ENCODE measurements at regions of chrX and their contacts with region 1.

Region 1: GRCh38 chrX:31658360-31658759 is 586.5 kb upstream of the FTHL17 start:
- DNase-seq: no peak
- ATAC-seq: no peak
- H3K4me3 ChIP-seq: no peak overlapping the region
- H3K27ac ChIP-seq: no peak overlapping the region
- H3K4me1 ChIP-seq: no peaks in the 10 kb centered on the region
- H3K27me3 ChIP-seq: no peaks in the 10 kb centered on the region
- CTCF ChIP-seq: peak in 2 of 3 experiments; percentile 8 to 35; a peak in 1 of 6 replicates
- POLR2A ChIP-seq: no peak
- RAD21 ChIP-seq: peak; percentile 28

Region 2: GRCh38 chrX:31036895-31037294 is 621.5 kb before region 1 on chrX:
- CTCF ChIA-PET with region 1: no interaction called
- POLR2A ChIA-PET with region 1: no interaction called
- RAD21 ChIA-PET with region 1: no interaction called
- intact Hi-C with region 1: loop called (anchors 2 kb)
- DNase-seq: peak; percentile 6
- ATAC-seq: peak; percentile 72
- H3K4me3 ChIP-seq: no peak overlapping the region
- H3K27ac ChIP-seq: no peak overlapping the region
- H3K4me1 ChIP-seq: no peaks in the 10 kb centered on the region
- H3K27me3 ChIP-seq: no peaks in the 10 kb centered on the region
- CTCF ChIP-seq: peak; percentile 7 to 56 (median 53); a peak in 4 of 6 replicates
- POLR2A ChIP-seq: no peak
- RAD21 ChIP-seq: peak; percentile 26

Region 3: DNA sequence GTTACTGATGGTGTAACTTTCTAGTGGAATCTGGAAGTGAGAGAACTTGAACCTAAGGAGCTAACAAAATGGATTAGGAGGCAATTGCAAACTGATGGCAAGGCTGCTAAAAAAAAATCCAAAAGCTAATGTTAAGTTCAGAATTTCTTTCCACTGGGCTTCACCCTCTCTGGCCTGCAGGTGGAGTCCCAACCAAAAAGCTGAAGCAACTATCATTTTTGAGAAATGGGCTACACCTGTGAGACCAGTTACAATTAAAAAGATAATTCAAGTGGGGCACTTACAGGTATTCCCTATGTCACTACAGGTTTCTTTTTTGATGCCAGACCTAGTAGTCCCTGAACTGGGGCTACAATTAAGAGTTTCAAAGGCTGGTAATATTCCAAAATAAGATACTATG is 444.4 kb before region 1 on chrX:
- CTCF ChIA-PET with region 1: no interaction called
- POLR2A ChIA-PET with region 1: no interaction called
- RAD21 ChIA-PET with region 1: no interaction called
- intact Hi-C with region 1: loop called (anchors 5 kb)
- DNase-seq: no peak
- ATAC-seq: no peak
- H3K4me3 ChIP-seq: no peak overlapping the region
- H3K27ac ChIP-seq: no peak overlapping the region
- H3K4me1 ChIP-seq: no peaks in the 10 kb centered on the region
- H3K27me3 ChIP-seq: no peaks in the 10 kb centered on the region
- CTCF ChIP-seq: peak in 2 of 3 experiments; percentile 19 to 34; a peak in 3 of 6 replicates
- POLR2A ChIP-seq: no peak
- RAD21 ChIP-seq: no peak